ENCODE measurements at regions of chr6 and their contacts with region 1.

Region 1: GRCh38 chr6:122653094-122653493 is 42.9 kb downstream of the PKIB start:
- DNase-seq: peak; percentile 91
- H3K4me3 ChIP-seq: no peak overlapping the region
- H3K27ac ChIP-seq: peak overlapping the region; percentile 47
- H3K4me1 ChIP-seq: peaks cover 53% of the 10 kb centered on the region
- H3K27me3 ChIP-seq: no peaks in the 10 kb centered on the region
- CTCF ChIP-seq: no peak

Region 2: DNA sequence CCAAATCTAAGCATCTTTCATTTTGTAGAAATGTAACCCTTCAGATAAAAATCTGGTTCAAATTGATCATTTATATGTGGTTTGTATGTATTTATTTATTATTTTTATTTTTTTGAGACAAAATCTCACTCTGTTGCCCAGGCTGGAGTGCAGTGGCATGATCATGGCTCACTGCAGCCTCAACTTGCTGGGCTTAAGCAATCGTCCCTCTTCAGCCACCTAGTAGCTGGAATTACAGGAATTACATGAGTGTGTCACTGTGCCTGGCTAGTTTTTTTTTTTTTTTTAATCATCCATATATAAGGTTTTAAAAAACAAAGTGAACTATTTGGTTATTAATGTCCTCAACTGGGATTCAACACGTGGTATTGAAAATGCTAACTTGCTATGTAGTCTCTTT is 61.5 kb before region 1 on chr6:
- CTCF ChIA-PET with region 1: no interaction called
- dilution Hi-C with region 1: no loop called
- in situ Hi-C with region 1: no loop called
- intact Hi-C with region 1: no loop called
- DNase-seq: no peak
- H3K4me3 ChIP-seq: no peak overlapping the region
- H3K27ac ChIP-seq: no peak overlapping the region
- H3K4me1 ChIP-seq: no peaks in the 10 kb centered on the region
- H3K27me3 ChIP-seq: peaks cover 2% of the 10 kb centered on the region
- CTCF ChIP-seq: no peak

Region 3: GRCh38 chr6:122696079-122696478 is 43.0 kb after region 1 on chr6:
- CTCF ChIA-PET with region 1: no interaction called
- dilution Hi-C with region 1: no loop called
- in situ Hi-C with region 1: no loop called
- intact Hi-C with region 1: loop called (anchors 5 kb)
- DNase-seq: peak; percentile 86
- H3K4me3 ChIP-seq: peak overlapping the region in 1 of 3 experiments; percentile 6
- H3K27ac ChIP-seq: peak overlapping the region; percentile 77
- H3K4me1 ChIP-seq: peaks cover 16% of the 10 kb centered on the region
- H3K27me3 ChIP-seq: no peaks in the 10 kb centered on the region
- CTCF ChIP-seq: no peak

Measured in mammary epithelial cell (primary cell).